Astrocyte of the spinal cord (primary cell): ENCODE measurements at regions of chr9 and their contacts with region 1.

Region 1: DNA sequence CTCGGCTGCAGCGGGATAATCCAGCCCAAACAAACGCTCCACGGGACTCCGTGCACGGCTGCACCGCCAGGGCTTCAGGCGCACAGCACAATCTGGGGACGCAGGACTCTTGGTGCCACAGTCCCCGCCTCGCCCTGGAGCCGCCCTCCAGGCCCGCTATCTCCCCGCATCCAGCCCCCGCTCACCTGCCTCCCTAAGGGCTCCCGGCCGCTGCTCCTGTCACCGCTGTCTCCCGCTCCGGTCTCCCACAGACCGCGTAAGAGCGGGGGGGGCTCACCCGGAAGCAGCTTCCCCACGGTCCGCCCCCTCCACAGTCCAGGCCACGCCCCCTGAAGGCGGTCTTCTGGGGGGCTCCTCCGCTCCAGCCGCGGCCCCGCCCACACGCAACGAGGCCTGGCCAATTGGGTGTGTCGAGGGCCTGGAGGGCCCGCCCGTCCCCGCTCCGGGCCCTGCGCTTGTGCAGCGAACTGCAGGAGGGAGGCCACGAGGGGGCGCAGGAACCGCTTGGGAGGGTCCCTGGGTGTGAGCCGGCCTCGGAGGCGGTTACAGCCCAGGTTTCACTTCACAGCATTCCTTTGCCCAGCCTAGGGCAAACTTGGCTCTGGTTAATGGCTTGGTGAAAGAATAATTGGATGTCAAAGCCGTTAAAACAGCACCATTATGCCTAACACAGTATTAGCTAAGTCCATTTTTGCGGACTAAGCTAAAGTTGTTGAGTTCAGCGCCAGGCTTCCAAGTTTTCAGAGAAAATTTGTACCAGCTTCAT is at the start of gene ALAD:
- DNase-seq: peak; percentile 99
- H3K4me3 ChIP-seq: peak within 1 kb of the TSS; percentile 88
- CTCF ChIP-seq: peak; percentile 95

Region 2: GRCh38 chr9:113657703-113658544 is 256.7 kb after region 1 on chr9:
- in situ Hi-C with region 1: loop called (anchors 25 kb)
- DNase-seq: peak; percentile 78
- H3K4me3 ChIP-seq: no peak overlapping the region
- CTCF ChIP-seq: peak; percentile 96

Region 3: GRCh38 chr9:113844466-113844865 is 443.3 kb after region 1 on chr9:
- in situ Hi-C with region 1: no loop called
- DNase-seq: no peak
- H3K4me3 ChIP-seq: no peak overlapping the region
- CTCF ChIP-seq: no peak